Ascending aorta (tissue), 2 donors: ENCODE measurements at regions of chr22 and their contacts with region 1.

Region 1: DNA sequence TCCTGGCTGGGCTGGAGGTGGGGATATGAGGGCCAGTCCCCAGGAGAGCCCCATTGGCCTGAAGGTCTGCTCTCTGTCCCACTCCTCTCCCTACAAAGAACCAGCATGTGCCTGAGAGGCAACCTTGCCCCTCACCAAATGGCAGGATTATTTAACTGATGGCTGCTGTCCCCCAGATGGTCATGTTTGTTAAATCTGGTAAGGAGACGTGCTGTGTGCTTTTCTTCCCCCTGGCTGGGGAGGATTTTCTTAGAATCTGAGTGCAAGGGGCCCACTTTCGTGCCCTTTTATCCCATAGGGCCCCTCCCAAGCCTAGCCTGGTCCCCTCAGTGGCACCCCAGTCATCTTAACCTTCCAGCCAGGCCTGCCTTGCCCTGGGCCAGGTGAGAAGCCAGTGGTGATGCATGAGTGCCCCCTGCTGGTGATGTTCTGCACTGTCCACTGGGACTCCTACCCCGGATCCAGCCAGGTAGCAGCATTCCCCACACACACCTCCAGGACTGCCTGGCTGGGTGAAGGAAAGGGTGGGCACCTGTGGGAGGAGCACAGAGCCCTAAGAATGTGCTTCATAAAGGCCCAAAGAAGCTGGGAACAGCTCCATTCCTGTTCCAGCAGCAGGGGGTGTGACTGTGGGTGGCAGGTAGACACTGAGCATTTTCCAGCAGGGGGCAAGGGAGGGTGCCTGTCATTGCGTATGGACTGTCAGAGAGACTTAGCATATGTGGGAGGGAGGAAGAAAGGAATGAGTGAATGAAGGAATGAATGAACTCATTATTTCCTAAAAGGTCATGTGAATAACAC is 28.9 kb downstream of the MFNG start:
- DNase-seq: no peak
- H3K4me3 ChIP-seq: no peak overlapping the region
- H3K27ac ChIP-seq: no peak overlapping the region
- H3K4me1 ChIP-seq: no peaks in the 10 kb centered on the region
- H3K27me3 ChIP-seq: no peaks in the 10 kb centered on the region
- CTCF ChIP-seq: peak; percentile 44 to 60 (median 55)

Region 2: GRCh38 chr22:37309211-37310074 is 147.8 kb before region 1 on chr22:
- intact Hi-C with region 1: loop called (anchors 5 kb)
- DNase-seq: no peak
- H3K4me3 ChIP-seq: no peak overlapping the region
- H3K27ac ChIP-seq: no peak overlapping the region
- H3K4me1 ChIP-seq: peaks cover 6 to 12% of the 10 kb centered on the region in 2 donors
- H3K27me3 ChIP-seq: no peaks in the 10 kb centered on the region
- CTCF ChIP-seq: no peak

Region 3: GRCh38 chr22:37394341-37394740 is 63.0 kb before region 1 on chr22:
- intact Hi-C with region 1: no loop called
- DNase-seq: no peak
- H3K4me3 ChIP-seq: no peak overlapping the region
- H3K27ac ChIP-seq: no peak overlapping the region
- H3K4me1 ChIP-seq: no peaks in the 10 kb centered on the region
- H3K27me3 ChIP-seq: no peaks in the 10 kb centered on the region
- CTCF ChIP-seq: no peak

Region 4: GRCh38 chr22:37623075-37624016 is 166.1 kb after region 1 on chr22:
- intact Hi-C with region 1: no loop called
- DNase-seq: peak in 1 of 2 donors; percentile 83
- H3K4me3 ChIP-seq: no peak overlapping the region
- H3K27ac ChIP-seq: peak overlapping the region in 1 of 2 donors; percentile 36
- H3K4me1 ChIP-seq: peaks cover 0 to 16% of the 10 kb centered on the region in 2 donors
- H3K27me3 ChIP-seq: no peaks in the 10 kb centered on the region
- CTCF ChIP-seq: peak; percentile 34 to 94 (median 94)